Adrenal gland (tissue), 19 donors: ENCODE measurements at regions of chr2 and their contacts with region 1.

Region 1: DNA sequence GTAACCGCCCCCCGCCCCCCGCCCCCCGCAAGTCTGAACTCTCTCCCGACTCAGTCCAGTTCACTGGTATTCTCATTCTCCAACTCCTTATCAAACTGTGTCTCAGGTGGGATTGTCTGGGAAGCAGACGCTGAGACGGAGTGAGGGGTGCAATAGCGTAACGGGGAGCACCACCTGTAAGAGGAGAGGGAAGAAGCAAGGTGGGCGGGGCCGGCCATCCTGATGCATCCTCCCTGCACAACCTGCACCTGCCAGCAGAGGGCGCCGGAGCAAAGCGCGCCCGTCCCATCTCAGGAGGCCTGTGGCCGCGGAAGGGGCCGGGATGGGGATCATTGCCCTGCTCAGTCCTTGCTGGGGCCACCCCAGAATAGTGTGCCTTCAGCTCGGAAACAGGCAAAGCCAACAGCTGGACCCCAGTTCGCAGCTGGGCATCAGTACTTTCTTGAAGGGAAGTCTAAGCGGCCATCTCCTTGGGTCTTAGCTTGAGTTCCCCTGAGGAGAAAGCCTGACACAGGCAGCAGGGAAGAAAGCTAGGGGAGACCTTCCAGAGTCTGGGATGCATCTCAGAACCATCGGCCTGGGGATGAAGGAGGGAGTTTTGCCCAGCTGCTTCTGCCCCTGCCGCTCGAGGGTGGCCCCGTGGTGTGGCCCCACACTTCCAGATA is 208.0 kb downstream of the TFCP2L1 start:
- DNase-seq: peak; percentile 40 to 78 (median 69)
- H3K4me3 ChIP-seq: no peak overlapping the region
- H3K27ac ChIP-seq: no peak overlapping the region
- H3K4me1 ChIP-seq: peaks cover 0 to 8% of the 10 kb centered on the region in 2 donors
- H3K27me3 ChIP-seq: peaks cover 4% of the 10 kb centered on the region
- CTCF ChIP-seq: peak; percentile 60 to 84 (median 74)
- POLR2A ChIP-seq: no peak

Region 2: GRCh38 chr2:120330946-120331822 is 745.8 kb before region 1 on chr2:
- intact Hi-C with region 1: loop called in 1 of 2 experiments (anchors 10 kb)
- DNase-seq: no peak
- H3K4me3 ChIP-seq: no peak overlapping the region
- H3K27ac ChIP-seq: no peak overlapping the region
- H3K4me1 ChIP-seq: no peaks in the 10 kb centered on the region
- H3K27me3 ChIP-seq: no peaks in the 10 kb centered on the region
- CTCF ChIP-seq: no peak
- POLR2A ChIP-seq: no peak

Region 3: GRCh38 chr2:120694034-120694433 is 383.0 kb before region 1 on chr2:
- intact Hi-C with region 1: loop called (anchors 2 kb)
- DNase-seq: no peak
- H3K4me3 ChIP-seq: no peak overlapping the region
- H3K27ac ChIP-seq: no peak overlapping the region
- H3K4me1 ChIP-seq: no peaks in the 10 kb centered on the region
- H3K27me3 ChIP-seq: peaks cover 12% of the 10 kb centered on the region
- CTCF ChIP-seq: no peak
- POLR2A ChIP-seq: no peak